Mammary epithelial cell (primary cell): ENCODE measurements at regions of chr6 and their contacts with region 1.

Region 1: DNA sequence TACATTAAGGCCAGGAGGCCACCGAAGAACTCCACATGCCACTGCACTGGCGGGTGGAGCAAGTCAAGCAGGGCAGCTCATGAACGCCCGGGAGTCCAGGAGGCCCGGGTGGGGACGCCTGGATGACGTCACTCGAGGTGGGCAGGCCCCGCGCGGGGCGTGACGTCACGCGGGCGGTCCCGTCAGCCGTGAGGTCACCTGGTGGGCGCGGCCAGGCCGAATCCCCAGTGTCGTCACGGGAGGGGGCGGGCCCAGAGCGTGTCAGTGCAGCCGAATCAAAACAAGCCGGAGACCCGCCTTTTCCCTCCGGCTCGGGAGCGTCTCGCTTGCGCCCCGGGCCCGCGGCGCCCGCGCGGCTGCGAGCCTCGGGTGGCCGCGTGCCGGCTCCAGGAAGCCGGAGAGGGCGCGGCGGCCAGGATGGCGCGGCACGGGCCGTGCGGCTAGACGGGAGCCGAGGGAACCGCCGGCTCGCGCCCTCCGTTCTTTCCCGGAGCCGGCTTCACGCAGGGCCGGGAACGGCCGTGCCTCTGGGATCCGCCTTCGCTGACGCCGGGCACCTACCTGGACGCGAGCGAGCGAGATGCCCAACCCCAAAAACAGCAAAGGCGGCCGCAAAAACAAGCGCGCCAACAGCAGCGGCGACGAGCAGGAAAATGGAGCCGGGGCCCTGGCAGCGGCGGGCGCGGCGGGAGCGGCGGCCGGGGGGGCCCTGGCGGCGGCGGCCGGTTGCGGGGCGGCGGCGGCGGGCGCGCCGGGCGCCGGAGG is at the start of gene HECA:
- DNase-seq: peak; percentile 89
- H3K4me3 ChIP-seq: peak within 1 kb of the TSS; percentile 79 to 93 (median 89)
- H3K27ac ChIP-seq: peak within 1 kb of the TSS; percentile 78
- H3K4me1 ChIP-seq: no peaks in the 10 kb centered on the region
- H3K27me3 ChIP-seq: no peaks in the 10 kb centered on the region
- CTCF ChIP-seq: no peak
- total RNA-seq, gene HECA: 15.0 to 23.8 TPM

Region 2: DNA sequence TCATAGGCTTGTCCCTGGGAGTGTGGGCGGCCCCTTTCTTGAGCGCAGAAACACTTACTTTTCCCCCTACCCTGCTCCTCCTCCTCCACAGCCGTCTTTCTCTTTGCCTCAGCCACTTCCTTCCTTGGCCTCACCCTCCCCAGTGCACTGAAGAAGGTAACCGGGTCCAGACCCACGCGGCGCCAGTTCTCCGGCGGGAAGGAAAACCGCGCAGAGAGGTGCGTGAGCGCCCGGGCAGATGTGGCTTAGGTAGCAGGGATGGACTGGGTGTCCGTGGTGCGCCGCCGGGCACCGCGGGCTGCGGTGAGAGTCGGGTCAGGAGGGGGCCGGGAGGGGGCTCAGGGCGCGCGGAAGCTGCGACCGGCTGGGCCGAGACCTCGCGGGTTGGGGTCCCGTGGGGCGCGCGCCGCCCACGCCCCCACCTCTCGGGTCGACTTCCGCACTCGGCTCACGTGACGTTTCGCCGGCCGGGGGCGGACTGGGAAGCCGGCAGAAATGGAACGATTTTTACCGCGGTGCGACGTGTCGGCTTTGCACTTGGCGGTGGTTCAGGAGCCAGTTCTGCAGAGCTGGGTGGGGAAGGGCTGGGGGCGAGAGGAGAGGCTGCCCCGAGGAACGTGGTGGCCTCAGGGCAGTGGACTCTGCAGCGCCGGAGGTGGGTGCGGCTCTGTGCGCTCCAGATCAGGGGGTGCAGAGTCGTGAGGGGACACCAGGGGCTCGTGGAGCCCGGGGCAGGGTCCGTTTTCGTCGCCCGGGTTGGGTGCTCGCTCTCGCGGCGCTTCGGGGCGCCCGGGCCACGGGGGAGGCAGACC is 106.1 kb before region 1 on chr6 and contains the start of gene ABRACL:
- CTCF ChIA-PET with region 1: no interaction called
- dilution Hi-C with region 1: no loop called
- in situ Hi-C with region 1: no loop called
- intact Hi-C with region 1: loop called (anchors 2 kb)
- DNase-seq: peak; percentile 77
- H3K4me3 ChIP-seq: peak within 1 kb of the TSS; percentile 81 to 98 (median 81)
- H3K27ac ChIP-seq: peak within 1 kb of the TSS; percentile 83
- H3K4me1 ChIP-seq: peaks cover 12% of the 10 kb centered on the region
- H3K27me3 ChIP-seq: no peaks in the 10 kb centered on the region
- CTCF ChIP-seq: no peak
- total RNA-seq, gene ABRACL: 42.5 to 50.4 TPM

Region 3: DNA sequence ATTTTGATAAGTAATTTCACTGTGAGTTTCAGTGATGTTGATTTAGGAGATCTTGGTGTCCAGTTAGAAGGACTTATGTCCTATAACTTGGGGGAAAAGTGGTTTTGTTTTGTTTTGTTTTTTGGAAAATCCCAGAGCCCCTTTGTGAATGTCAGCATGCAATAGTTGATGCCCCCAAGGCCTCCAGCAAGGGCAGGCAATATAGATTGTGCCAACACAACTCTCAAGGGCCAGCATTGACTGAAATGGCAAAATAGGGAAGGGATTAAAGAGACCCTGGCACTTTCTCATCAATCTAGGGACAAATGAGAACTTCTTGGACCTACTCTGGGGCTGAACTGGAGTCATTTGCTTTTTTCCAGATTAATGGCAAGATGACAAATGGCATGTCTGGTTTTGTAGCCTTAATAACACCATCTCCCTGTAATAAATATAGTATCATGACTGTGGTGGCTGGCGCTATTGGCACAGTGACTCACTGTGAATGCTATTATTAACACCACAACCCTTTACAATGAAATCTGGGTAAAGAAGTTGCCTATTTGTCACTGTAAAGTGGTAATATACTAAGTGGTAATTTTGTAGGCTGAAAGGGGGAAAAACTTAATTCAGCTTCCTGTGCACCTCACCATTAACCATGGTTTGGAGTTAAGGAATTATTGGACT is 54.6 kb before region 1 on chr6:
- CTCF ChIA-PET with region 1: no interaction called
- dilution Hi-C with region 1: no loop called
- in situ Hi-C with region 1: no loop called
- intact Hi-C with region 1: no loop called
- DNase-seq: peak; percentile 61
- H3K4me3 ChIP-seq: no peak overlapping the region
- H3K27ac ChIP-seq: no peak overlapping the region
- H3K4me1 ChIP-seq: no peaks in the 10 kb centered on the region
- H3K27me3 ChIP-seq: no peaks in the 10 kb centered on the region
- CTCF ChIP-seq: no peak

Region 4: DNA sequence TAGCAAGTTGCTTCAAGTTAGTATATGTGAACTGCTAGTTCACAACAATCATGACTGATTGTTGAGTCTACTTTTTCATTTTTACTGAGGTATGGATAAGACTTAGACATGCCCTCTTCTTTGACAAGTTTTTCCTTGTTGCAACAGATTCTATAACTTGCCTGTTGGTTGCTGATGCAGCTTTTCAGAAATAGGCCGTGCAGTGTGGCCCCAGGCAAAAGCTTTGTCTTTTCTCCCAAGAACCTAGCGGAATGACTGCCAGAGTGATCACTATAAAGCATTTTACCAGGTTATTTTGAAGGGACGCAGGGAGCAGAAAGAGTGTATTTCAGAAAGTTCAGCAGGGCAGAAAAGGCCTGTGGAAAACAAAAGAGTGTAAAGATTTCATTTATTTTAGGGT is 15.9 kb after region 1 on chr6:
- CTCF ChIA-PET with region 1: no interaction called
- dilution Hi-C with region 1: no loop called
- in situ Hi-C with region 1: no loop called
- intact Hi-C with region 1: loop called (anchors 2 kb)
- DNase-seq: peak; percentile 74
- H3K4me3 ChIP-seq: no peak overlapping the region
- H3K27ac ChIP-seq: peak overlapping the region; percentile 36
- H3K4me1 ChIP-seq: peaks cover 11% of the 10 kb centered on the region
- H3K27me3 ChIP-seq: no peaks in the 10 kb centered on the region
- CTCF ChIP-seq: no peak